H1 (cell line): ENCODE measurements at regions of chr14 and their contacts with region 1.

Region 1: GRCh38 chr14:21383848-21384493 is at the start of gene SUPT16H:
- DNase-seq: peak; percentile 92
- H3K4me3 ChIP-seq: peak within 1 kb of the TSS; percentile 98 to 100 (median 99)
- H3K27ac ChIP-seq: peak within 1 kb of the TSS; percentile 94
- H3K4me1 ChIP-seq: peaks cover 0 to 3% (median 0%) of the 10 kb centered on the region in 4 experiments; a peak in 3 of 7 replicates
- H3K27me3 ChIP-seq: no peaks in the 10 kb centered on the region
- CTCF ChIP-seq: no peak
- EP300 ChIP-seq: peak in 1 of 2 experiments; percentile 7; a peak in 1 of 3 replicates
- POLR2A ChIP-seq: peak; percentile 74 to 94
- RAD21 ChIP-seq: no peak
- total RNA-seq, gene SUPT16H: 201 and 209 TPM in 2 replicates

Region 2: DNA sequence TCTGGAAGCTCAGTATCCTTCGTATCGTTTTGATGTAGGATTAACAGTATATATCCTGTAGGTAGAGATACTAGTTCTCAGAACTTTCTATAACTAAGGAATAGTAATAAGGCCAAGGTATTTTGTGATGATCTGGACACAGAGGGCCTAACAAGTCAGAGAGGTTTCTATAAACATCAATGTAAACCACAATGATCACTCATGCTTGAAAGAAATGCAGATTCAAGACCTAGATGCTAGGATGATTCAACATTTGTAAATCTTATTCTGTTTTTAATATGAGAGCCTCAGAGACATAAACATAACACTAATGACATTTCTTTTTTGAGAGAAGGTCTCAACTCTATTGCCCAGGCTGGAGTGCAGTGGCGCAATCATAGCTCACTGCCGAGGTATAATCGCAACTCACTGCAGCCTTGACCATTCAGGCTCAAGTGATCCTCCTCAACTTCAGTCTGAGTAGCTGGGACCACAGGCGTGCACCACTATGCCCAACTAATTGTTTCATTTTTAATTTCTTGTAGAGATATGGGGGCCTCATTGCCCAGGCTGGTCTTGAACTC is 16.3 kb before region 1 on chr14:
- CTCF ChIA-PET with region 1: interaction called, 3 read pairs
- POLR2A ChIA-PET with region 1: interaction called, 12 read pairs
- DNase-seq: no peak
- H3K4me3 ChIP-seq: no peak overlapping the region
- H3K27ac ChIP-seq: no peak overlapping the region
- H3K4me1 ChIP-seq: no peaks in the 10 kb centered on the region
- H3K27me3 ChIP-seq: no peaks in the 10 kb centered on the region
- CTCF ChIP-seq: no peak
- EP300 ChIP-seq: no peak
- POLR2A ChIP-seq: no peak
- RAD21 ChIP-seq: no peak

Region 3: DNA sequence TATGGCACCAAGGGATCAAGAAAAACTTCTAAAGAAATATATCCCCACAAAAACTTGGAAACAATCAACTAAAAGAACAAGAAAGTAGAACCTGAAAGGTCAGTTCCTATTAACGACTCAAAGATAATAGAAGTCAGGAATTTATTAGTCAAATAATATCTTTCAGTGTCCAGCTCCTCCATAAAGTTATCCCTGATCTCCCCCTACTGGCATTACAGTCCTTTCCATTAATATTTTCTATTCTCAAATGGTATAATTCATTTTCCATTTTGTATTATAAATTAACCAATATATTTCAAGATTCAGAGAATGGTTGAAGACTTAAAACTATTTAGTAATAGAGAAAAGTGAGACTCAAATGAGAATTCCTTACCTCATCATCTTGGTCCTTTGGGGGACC is 11.5 kb after region 1 on chr14:
- CTCF ChIA-PET with region 1: no interaction called
- POLR2A ChIA-PET with region 1: interaction called, 13 read pairs
- DNase-seq: no peak
- H3K4me3 ChIP-seq: no peak overlapping the region
- H3K27ac ChIP-seq: no peak overlapping the region
- H3K4me1 ChIP-seq: no peaks in the 10 kb centered on the region
- H3K27me3 ChIP-seq: no peaks in the 10 kb centered on the region
- CTCF ChIP-seq: no peak
- EP300 ChIP-seq: no peak
- POLR2A ChIP-seq: no peak
- RAD21 ChIP-seq: no peak